Keratinocyte (primary cell): ENCODE measurements at regions of chr1 and their contacts with region 1.

Region 1: DNA sequence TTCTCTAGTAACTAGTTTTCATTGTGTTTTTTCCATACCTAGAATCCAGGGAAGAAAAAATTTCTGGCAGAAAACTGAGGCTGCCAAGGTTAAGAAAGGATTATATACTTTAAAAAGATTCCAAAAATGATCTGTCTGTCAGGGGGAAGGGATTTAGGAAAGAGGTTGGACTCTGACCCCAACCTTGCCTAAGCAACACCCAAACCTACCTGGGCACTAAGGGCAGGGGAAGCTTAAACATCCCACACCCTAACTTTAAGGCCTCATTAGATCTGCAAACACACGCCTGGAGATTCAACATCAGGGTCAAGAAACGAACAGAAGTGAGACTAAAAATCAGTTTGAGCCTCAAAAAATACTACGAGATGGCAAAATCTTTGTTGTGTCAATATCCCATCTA is 19.4 kb downstream of the KDM5B start:
- DNase-seq: no peak
- H3K4me3 ChIP-seq: no peak overlapping the region
- H3K27ac ChIP-seq: no peak overlapping the region
- H3K4me1 ChIP-seq: no peaks in the 10 kb centered on the region
- H3K27me3 ChIP-seq: no peaks in the 10 kb centered on the region
- CTCF ChIP-seq: no peak

Region 2: DNA sequence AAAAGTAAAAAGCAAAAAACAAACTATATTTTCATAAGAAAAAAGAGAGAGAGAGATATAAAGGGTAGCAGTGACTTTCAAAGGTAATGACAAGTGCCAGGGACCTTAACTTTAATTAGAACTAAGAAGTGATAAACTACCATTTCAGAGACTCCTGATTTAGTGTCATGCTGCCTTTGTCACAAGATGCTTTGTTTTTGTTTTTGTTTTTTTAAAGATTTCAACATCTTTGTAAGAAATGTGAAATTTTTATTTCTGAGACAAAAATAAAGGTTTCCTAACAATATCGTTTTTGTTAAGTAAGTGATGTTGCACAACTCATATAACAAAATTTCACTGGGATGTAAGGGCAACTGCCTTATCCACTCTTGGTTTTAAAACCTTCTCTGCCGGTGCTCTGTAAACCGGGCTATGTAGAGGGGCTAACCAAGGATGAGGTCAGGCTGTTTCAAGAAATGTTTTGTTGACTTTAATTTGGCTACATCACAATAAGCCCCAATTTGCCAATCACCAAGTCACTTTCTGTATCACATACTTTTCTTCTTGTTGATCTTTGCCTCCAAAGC is 43.4 kb before region 1 on chr1:
- dilution Hi-C with region 1: loop called (anchors 5 kb)
- DNase-seq: no peak
- H3K4me3 ChIP-seq: no peak overlapping the region
- H3K27ac ChIP-seq: no peak overlapping the region
- H3K4me1 ChIP-seq: no peaks in the 10 kb centered on the region
- H3K27me3 ChIP-seq: no peaks in the 10 kb centered on the region
- CTCF ChIP-seq: no peak

Region 3: DNA sequence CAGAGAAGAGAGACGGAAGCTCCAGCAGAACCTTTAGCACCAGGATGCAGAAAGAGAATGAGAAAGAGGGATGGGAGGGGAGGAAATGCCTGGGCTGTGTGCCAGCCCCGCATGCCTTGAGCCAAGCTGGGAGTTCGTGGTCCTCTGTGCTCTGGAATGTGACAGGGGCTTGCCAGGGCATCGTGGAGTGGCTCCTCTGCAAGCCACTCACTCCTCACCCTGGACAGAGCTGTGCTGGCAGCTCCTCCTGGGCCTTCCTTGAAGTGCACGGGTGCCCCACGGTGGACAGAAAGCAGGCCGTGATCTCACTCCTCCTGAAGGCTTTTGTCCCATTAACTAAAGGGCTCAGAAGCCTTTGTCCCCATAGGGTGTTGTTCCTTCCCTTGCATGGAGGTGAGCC is 652.0 kb after region 1 on chr1:
- dilution Hi-C with region 1: no loop called
- DNase-seq: no peak
- H3K4me3 ChIP-seq: no peak overlapping the region
- H3K27ac ChIP-seq: no peak overlapping the region
- H3K4me1 ChIP-seq: no peaks in the 10 kb centered on the region
- H3K27me3 ChIP-seq: peaks cover 29% of the 10 kb centered on the region
- CTCF ChIP-seq: peak; percentile 9 to 50 (median 46)